ENCODE measurements at regions of chr14 and their contacts with region 1.

Region 1: GRCh38 chr14:32252030-32252670 is 49.1 kb upstream of the RNU6-8 start:
- DNase-seq: peak; percentile 55 to 79 (median 69)
- ATAC-seq: peak; percentile 94
- H3K4me3 ChIP-seq: no peak overlapping the region
- H3K27ac ChIP-seq: no peak overlapping the region
- H3K4me1 ChIP-seq: peaks cover 5% of the 10 kb centered on the region
- H3K27me3 ChIP-seq: no peaks in the 10 kb centered on the region
- CTCF ChIP-seq: peak; percentile 57 to 90 (median 87)
- POLR2A ChIP-seq: no peak

Region 2: GRCh38 chr14:31510222-31510621 is 741.9 kb before region 1 on chr14:
- intact Hi-C with region 1: loop called (anchors 5 kb)
- DNase-seq: no peak
- ATAC-seq: peak; percentile 45
- H3K4me3 ChIP-seq: no peak overlapping the region
- H3K27ac ChIP-seq: no peak overlapping the region
- H3K4me1 ChIP-seq: no peaks in the 10 kb centered on the region
- H3K27me3 ChIP-seq: no peaks in the 10 kb centered on the region
- CTCF ChIP-seq: peak; percentile 37 to 70 (median 59)
- POLR2A ChIP-seq: no peak

Region 3: DNA sequence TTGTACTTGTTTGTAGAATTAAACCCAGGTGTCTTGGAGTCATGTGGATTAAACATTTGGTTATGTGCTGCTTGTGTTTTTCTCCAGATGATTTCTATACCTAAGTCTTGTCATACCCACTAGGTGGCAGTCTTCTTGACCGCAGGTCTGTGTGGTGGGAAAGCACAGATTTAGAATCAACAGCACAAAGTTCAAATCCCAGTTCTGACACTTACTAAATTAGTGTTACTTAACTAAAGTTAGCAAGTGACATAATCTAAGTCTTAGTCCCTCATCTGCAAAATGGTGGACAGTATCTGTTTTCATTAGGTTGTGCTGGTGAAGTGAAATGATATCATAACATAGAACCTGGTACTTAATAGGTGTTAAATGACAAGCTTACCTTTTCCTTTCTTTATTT is 326.0 kb before region 1 on chr14:
- intact Hi-C with region 1: loop called (anchors 10 kb)
- DNase-seq: no peak
- ATAC-seq: peak; percentile 40
- H3K4me3 ChIP-seq: no peak overlapping the region
- H3K27ac ChIP-seq: no peak overlapping the region
- H3K4me1 ChIP-seq: peaks cover 6% of the 10 kb centered on the region
- H3K27me3 ChIP-seq: no peaks in the 10 kb centered on the region
- CTCF ChIP-seq: peak in 6 of 7 experiments; percentile 43 to 59 (median 52)
- POLR2A ChIP-seq: no peak

Region 4: GRCh38 chr14:32073537-32074189 is 178.5 kb before region 1 on chr14:
- intact Hi-C with region 1: loop called (anchors 5 kb)
- DNase-seq: peak; percentile 60 to 85 (median 68)
- ATAC-seq: no peak
- H3K4me3 ChIP-seq: no peak overlapping the region
- H3K27ac ChIP-seq: peak overlapping the region in 1 of 4 donors; percentile 98
- H3K4me1 ChIP-seq: peaks cover 7% of the 10 kb centered on the region
- H3K27me3 ChIP-seq: no peaks in the 10 kb centered on the region
- CTCF ChIP-seq: peak; percentile 38 to 87 (median 80)
- POLR2A ChIP-seq: no peak

Region 5: DNA sequence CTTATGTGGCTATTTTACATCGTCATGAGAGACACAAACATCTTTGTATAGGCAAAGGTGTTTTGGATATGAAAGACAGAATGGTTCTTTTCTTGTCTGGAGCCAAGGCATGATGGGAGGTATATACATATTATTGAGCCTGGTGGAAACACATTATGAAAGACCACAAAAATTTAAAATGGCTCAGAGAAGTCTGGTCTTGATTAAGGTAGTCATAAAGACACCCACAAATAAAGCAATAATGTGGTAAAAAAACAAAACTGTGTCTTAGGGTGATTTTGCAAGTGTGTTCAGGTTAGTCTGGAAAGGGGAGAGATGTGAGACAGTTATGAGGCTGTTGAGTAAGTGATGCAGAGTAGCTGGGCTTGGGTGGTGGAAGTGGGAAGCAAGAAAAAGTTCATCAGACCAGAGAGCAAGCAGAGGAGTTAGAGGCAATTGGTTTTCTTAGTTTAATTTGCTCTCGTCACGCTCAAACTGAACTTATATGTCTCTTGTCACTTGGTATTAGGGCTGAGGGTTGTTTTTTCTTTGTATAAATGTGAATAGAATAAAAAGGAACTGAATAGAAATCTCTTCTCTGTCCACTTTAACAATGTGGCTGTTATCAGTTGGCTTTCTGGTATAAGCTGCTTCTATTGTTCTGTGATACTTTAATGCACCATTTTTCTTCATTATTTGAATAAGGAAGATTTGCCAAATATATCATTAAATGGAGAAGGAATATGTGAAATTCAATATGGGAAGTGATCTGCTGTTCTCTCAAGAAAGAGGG is 191.9 kb after region 1 on chr14:
- intact Hi-C with region 1: no loop called
- DNase-seq: no peak
- ATAC-seq: no peak
- H3K4me3 ChIP-seq: no peak overlapping the region
- H3K27ac ChIP-seq: no peak overlapping the region
- H3K4me1 ChIP-seq: no peaks in the 10 kb centered on the region
- H3K27me3 ChIP-seq: no peaks in the 10 kb centered on the region
- CTCF ChIP-seq: no peak
- POLR2A ChIP-seq: no peak

Region 6: DNA sequence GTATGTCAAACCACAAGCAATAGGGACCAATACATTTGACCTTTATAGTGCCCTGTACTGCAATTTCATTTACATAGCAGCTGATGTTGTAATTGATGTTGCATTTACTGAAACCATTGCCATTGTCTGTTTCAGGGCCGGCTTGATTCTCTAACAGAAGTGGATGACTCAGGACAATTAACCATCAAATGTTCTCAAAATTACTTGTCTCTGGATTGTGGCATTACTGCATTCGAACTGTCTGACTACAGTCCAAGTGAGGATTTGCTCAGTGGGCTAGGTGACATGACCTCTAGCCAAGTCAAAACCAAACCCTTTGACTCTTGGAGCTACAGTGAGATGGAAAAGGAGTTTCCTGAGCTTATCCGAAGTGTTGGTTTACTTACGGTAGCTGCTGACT is 292.9 kb after region 1 on chr14:
- intact Hi-C with region 1: no loop called
- DNase-seq: no peak
- ATAC-seq: no peak
- H3K4me3 ChIP-seq: no peak overlapping the region
- H3K27ac ChIP-seq: no peak overlapping the region
- H3K4me1 ChIP-seq: peaks cover 5% of the 10 kb centered on the region
- H3K27me3 ChIP-seq: no peaks in the 10 kb centered on the region
- CTCF ChIP-seq: no peak
- POLR2A ChIP-seq: no peak

Measured in body of pancreas (tissue), 4 donors.